Activated CD8-positive, alpha-beta T cell treated with anti-CD3 and anti-CD28 coated beads, Interleukin-2, amount 10 ng/mL, durations not matched to agents 7 days and 5 days (primary cell): ENCODE measurements at regions of chr6 and their contacts with region 1.

Region 1: DNA sequence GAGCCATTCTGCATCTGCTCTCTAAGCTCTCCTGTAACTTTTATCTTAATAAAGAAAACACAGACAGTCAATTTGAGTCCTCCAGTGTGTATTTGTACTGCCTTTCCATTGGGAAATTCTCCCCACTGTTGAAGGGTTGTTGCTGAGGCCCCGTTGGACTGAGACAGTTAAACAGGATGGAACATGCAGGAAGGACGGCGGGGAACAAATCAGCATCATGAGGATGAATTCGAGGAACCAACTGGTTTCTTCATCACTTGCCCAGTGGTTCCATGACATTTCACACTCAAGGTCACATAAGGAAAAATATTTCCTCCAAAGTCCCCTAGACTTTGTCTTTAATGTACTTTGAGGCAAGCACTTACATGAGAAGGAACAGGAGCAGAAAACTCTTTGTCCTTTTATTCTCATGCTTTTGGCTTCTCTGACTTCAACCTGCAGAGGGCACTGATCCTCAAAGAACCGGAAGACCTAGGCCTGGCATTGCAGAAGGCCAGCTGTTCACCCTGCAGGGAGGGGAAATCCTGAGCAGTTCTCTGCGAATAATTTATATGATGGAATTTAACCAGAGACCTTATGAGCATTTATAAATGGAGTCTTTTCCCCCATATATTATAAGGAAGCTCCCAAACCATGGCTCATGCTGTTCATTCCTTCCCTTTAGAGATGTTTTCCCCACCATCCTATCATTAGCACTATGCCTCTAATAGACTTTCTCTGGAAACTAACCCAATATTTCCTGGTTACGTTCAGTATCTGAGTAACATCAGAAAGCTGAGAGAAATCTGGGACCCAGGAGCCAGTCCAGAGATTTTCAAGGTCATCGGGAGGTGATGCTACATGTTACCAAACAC is 55.2 kb upstream of the ADGRF1 start:
- DNase-seq: peak; percentile 67
- ATAC-seq: peak; percentile 84
- H3K4me3 Mint-ChIP-seq: no peak overlapping the region
- H3K27ac Mint-ChIP-seq: no peak overlapping the region
- H3K4me1 Mint-ChIP-seq: peaks cover 7% of the 10 kb centered on the region
- H3K27me3 Mint-ChIP-seq: peaks cover 4% of the 10 kb centered on the region

Region 2: GRCh38 chr6:47009566-47009965 is 87.8 kb before region 1 on chr6:
- CTCF ChIA-PET with region 1: no interaction called
- POLR2A ChIA-PET with region 1: no interaction called
- DNase-seq: no peak
- ATAC-seq: no peak
- H3K4me3 Mint-ChIP-seq: no peak overlapping the region
- H3K27ac Mint-ChIP-seq: no peak overlapping the region
- H3K4me1 Mint-ChIP-seq: no peaks in the 10 kb centered on the region
- H3K27me3 Mint-ChIP-seq: peaks cover 2% of the 10 kb centered on the region

Region 3: GRCh38 chr6:47126647-47127391 is 29.5 kb after region 1 on chr6:
- CTCF ChIA-PET with region 1: no interaction called
- POLR2A ChIA-PET with region 1: no interaction called
- DNase-seq: no peak
- ATAC-seq: no peak
- H3K4me3 Mint-ChIP-seq: no peak overlapping the region
- H3K27ac Mint-ChIP-seq: no peak overlapping the region
- H3K4me1 Mint-ChIP-seq: no peaks in the 10 kb centered on the region
- H3K27me3 Mint-ChIP-seq: peaks cover 2% of the 10 kb centered on the region

Region 4: GRCh38 chr6:47309291-47310130 is 212.2 kb after region 1 on chr6 and contains the start of gene TNFRSF21:
- CTCF ChIA-PET with region 1: interaction called, 79 read pairs
- POLR2A ChIA-PET with region 1: no interaction called
- DNase-seq: peak; percentile 89
- ATAC-seq: peak; percentile 95
- H3K4me3 Mint-ChIP-seq: peak within 1 kb of the TSS; percentile 66
- H3K27ac Mint-ChIP-seq: no peak within 1 kb of the TSS
- H3K4me1 Mint-ChIP-seq: peaks cover 10% of the 10 kb centered on the region
- H3K27me3 Mint-ChIP-seq: peaks cover 35% of the 10 kb centered on the region
- total RNA-seq, gene TNFRSF21: 0.16 to 0.23 TPM